Activated B cell treated with CpG ODN at 0.5 μM for 24 hours (primary cell): ENCODE measurements at regions of chr14 and their contacts with region 1.

Region 1: DNA sequence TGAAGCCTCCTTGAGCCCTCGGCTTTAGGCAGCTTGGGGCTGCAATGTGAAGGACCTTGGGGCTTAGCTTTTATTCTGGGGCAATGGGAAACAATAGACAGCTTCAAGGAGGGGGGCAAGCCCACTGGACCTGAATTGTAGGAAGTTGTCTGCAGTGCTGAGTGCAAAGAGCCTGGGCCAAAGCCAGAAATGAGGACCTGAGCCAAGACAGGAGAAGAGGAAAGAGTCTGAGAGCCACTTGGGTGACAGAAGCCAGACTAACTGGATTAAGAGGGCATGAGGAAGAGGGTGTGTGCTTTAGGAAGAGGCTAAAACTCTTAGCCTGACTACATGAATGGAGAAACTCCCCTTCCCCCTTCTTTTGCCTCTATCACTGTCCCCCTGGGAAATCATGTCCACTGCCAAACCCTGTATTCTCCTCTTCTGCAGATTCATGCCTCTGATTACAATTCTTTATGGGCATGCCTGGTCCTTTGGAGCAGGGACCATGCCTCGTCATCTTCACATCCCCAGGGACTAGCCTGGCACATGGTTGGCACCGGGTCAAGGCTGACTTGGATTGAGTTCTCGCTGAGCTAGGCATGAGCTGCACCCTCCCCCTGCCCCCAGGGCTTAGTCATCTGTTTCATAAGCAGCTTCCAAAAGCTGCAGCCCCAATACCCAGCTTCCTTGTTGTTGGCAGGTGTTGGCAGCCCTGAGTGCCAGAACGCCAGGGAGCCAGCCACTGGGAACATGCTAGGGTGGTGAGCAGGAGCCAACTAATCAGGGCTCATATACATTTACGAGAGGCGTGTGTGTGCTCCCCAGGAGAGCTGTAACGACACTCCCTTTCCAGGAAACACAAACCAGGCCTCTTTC is 27.8 kb upstream of the JDP2 start:
- DNase-seq: no peak
- ATAC-seq: peak; percentile 18
- H3K4me3 Mint-ChIP-seq: no peak overlapping the region
- H3K27ac Mint-ChIP-seq: no peak overlapping the region
- H3K4me1 Mint-ChIP-seq: peaks cover 2% of the 10 kb centered on the region
- H3K27me3 Mint-ChIP-seq: peaks cover 3% of the 10 kb centered on the region
- CTCF ChIP-seq: no peak

Region 2: GRCh38 chr14:74671789-74672188 is 728.3 kb before region 1 on chr14:
- CTCF ChIA-PET with region 1: no interaction called
- POLR2A ChIA-PET with region 1: interaction called, 13 read pairs
- intact Hi-C with region 1: no loop called
- DNase-seq: no peak
- ATAC-seq: no peak
- H3K4me3 Mint-ChIP-seq: no peak overlapping the region
- H3K27ac Mint-ChIP-seq: no peak overlapping the region
- H3K4me1 Mint-ChIP-seq: no peaks in the 10 kb centered on the region
- H3K27me3 Mint-ChIP-seq: no peaks in the 10 kb centered on the region
- CTCF ChIP-seq: no peak

Region 3: DNA sequence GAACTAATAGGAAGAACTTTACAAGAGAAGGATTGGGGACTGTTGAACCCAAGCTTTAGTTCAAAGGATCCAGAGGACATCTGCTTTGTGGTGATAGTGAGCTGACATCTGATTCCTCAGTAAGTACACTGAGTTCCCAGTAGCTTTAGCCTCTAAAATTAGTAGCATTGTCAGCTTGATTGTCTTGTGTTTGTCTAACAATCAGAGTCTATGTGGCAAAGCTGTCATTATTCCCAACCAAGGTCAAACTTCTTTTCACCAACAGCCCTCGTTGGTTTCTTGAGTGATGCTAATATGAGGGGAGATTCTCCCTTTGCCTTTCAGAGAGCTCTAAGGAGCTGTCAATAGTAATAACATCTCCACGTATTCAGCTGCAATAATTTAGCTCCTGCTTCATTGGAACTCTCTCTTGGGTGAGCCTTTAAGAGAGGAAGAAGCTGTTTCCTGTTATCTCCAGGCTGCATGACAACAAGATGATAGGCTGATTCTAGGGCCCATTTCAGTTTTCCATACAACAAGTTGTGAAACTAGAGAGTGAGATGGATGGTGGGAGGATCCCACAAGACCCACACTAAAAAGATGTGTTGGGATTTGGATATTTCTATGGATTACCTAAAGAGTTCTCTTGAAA is 535.1 kb after region 1 on chr14:
- CTCF ChIA-PET with region 1: no interaction called
- POLR2A ChIA-PET with region 1: no interaction called
- intact Hi-C with region 1: no loop called
- DNase-seq: no peak
- ATAC-seq: no peak
- H3K4me3 Mint-ChIP-seq: no peak overlapping the region
- H3K27ac Mint-ChIP-seq: no peak overlapping the region
- H3K4me1 Mint-ChIP-seq: peaks cover 14% of the 10 kb centered on the region
- H3K27me3 Mint-ChIP-seq: no peaks in the 10 kb centered on the region
- CTCF ChIP-seq: no peak